K562 (cell line): ENCODE measurements at regions of chr9 and their contacts with region 1.

Region 1: GRCh38 chr9:130893341-130894101 is 3.1 kb downstream of the QRFP start:
- DNase-seq: peak; percentile 58 to 90 (median 72)
- ATAC-seq: peak; percentile 73
- H3K4me3 ChIP-seq: no peak overlapping the region
- H3K27ac ChIP-seq: no peak overlapping the region
- H3K4me1 ChIP-seq: peaks cover 6 to 56% of the 10 kb centered on the region in 2 experiments; a peak in 4 of 5 replicates
- H3K27me3 ChIP-seq: peaks cover 23 to 33% of the 10 kb centered on the region in 2 experiments; a peak in 4 of 5 replicates
- CTCF ChIP-seq: no peak
- EP300 ChIP-seq: no peak
- POLR2A ChIP-seq: no peak
- RAD21 ChIP-seq: no peak

Region 2: GRCh38 chr9:130927995-130928900 is 34.7 kb after region 1 on chr9:
- CTCF ChIA-PET with region 1: no interaction called
- POLR2A ChIA-PET with region 1: interaction called, 11 read pairs
- in situ Hi-C with region 1: no loop called
- intact Hi-C with region 1: no loop called
- DNase-seq: peak in 3 of 4 experiments; percentile 64 to 73 (median 66)
- ATAC-seq: no peak
- H3K4me3 ChIP-seq: no peak overlapping the region
- H3K27ac ChIP-seq: no peak overlapping the region
- H3K4me1 ChIP-seq: peaks cover 0 to 52% of the 10 kb centered on the region in 2 experiments; a peak in 2 of 5 replicates
- H3K27me3 ChIP-seq: peaks cover 95 to 100% of the 10 kb centered on the region in 2 experiments
- CTCF ChIP-seq: no peak
- EP300 ChIP-seq: no peak
- POLR2A ChIP-seq: no peak
- RAD21 ChIP-seq: no peak